Psoas muscle (tissue), 8 donors: ENCODE measurements at regions of chr12 and their contacts with region 1.

Region 1: DNA sequence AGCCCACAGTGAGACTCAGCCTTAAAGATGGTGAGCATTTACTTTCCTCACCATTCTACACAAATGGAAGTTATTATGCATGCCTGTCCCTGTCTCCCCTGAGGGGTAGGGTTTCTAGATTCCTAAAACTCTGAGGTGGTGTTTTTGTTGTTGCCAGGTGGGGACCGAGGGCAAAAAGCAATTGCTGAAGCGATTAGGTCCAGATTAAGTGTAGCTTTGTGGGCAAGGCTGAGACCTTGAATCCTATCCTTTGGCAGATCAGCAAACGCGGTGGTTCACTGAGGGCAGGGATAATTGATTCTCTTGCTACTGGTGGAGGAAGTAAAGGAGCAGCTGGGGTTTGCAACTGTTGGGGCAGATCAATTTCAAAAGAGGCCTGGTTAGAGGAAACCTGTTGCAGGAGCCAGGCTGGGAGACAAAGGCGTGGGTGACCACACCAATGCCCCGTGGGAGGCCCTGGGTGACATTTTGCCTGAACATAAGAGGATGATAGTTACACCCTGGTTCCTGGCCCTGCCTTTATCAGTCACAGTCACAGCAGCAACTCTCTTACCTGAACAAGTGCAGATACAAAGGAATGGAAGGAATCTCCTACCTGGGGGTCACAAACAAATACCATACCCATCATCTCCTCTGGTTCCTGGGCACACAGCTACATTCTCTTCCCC is 43.4 kb upstream of the RASSF3 start:
- DNase-seq: no peak
- ATAC-seq: peak in 1 of 4 donors; percentile 32
- H3K4me3 ChIP-seq: no peak overlapping the region
- H3K27ac ChIP-seq: no peak overlapping the region
- H3K4me1 ChIP-seq: peaks cover 21% of the 10 kb centered on the region
- H3K27me3 ChIP-seq: no peaks in the 10 kb centered on the region
- CTCF ChIP-seq: no peak

Region 2: DNA sequence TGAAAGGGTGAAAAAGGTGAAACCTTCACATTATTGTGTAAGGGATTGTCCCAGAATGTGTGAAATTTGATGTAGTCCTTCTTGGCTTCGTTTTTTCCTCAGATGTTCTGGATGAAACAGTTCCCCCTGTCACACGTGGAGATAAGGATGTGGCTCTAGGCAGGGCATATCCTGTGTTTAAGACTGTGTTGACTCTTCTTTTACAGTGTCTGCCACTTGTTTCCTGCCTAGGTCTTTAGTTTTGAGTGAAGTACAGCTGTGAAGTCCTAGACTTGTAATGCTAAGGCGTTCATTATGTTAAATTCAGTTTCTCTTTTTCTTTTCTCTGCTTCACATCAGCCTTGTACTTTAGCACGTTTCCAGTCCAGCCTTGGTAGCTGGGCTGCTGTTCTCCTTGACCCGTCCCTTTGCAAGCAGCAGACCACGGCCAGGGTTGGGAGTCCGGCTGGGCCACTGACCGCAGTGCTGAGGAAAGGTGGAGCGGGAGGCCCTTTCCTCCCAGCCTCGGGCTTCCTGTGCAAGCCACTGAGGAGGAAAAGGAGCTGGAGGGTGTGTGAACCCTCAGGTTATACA is 102.5 kb after region 1 on chr12:
- intact Hi-C with region 1: no loop called
- DNase-seq: peak in 1 of 2 donors; percentile 25
- ATAC-seq: peak in 1 of 4 donors; percentile 41
- H3K4me3 ChIP-seq: peak overlapping the region; percentile 15
- H3K27ac ChIP-seq: peak overlapping the region; percentile 44
- H3K4me1 ChIP-seq: peaks cover 38% of the 10 kb centered on the region
- H3K27me3 ChIP-seq: no peaks in the 10 kb centered on the region
- CTCF ChIP-seq: no peak

Region 3: GRCh38 chr12:64696080-64696741 is 129.3 kb after region 1 on chr12:
- intact Hi-C with region 1: loop called in 1 of 2 experiments (anchors 5 kb)
- DNase-seq: no peak
- ATAC-seq: no peak
- H3K4me3 ChIP-seq: no peak overlapping the region
- H3K27ac ChIP-seq: no peak overlapping the region
- H3K4me1 ChIP-seq: peaks cover 9% of the 10 kb centered on the region
- H3K27me3 ChIP-seq: no peaks in the 10 kb centered on the region
- CTCF ChIP-seq: peak; percentile 35